ENCODE measurements at regions of chr2 and their contacts with region 1.

Region 1: GRCh38 chr2:121076885-121077549 is 208.0 kb downstream of the TFCP2L1 start:
- DNase-seq: peak; percentile 71 to 77 (median 75)
- ATAC-seq: peak; percentile 83 to 90 (median 88)
- H3K4me3 ChIP-seq: no peak overlapping the region
- H3K27ac ChIP-seq: no peak overlapping the region
- H3K4me1 ChIP-seq: no peaks in the 10 kb centered on the region
- H3K27me3 ChIP-seq: no peaks in the 10 kb centered on the region
- CTCF ChIP-seq: peak; percentile 61 to 97 (median 92)
- POLR2A ChIP-seq: no peak

Region 2: DNA sequence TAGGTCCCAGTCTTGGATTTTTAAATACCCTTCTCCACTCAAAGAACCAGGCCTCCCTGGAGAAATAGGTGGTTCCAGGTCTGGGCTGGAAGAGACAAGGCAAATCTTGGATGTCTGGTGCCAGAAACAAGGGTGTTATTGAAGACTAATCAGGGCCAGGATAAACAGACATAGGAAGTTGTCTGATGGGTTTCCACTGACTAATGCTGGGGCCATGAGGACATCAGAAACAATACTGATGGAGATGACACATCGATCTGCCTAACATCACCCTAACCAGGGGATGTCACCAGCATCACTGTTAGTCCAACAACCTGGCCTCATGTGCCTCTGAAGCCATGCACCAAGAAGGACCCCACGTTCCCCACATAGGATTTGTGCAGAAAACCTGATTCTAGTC is 383.9 kb before region 1 on chr2:
- intact Hi-C with region 1: loop called (anchors 5 kb)
- DNase-seq: no peak
- ATAC-seq: no peak
- H3K4me3 ChIP-seq: no peak overlapping the region
- H3K27ac ChIP-seq: no peak overlapping the region
- H3K4me1 ChIP-seq: no peaks in the 10 kb centered on the region
- H3K27me3 ChIP-seq: no peaks in the 10 kb centered on the region
- CTCF ChIP-seq: no peak
- POLR2A ChIP-seq: no peak

Region 3: DNA sequence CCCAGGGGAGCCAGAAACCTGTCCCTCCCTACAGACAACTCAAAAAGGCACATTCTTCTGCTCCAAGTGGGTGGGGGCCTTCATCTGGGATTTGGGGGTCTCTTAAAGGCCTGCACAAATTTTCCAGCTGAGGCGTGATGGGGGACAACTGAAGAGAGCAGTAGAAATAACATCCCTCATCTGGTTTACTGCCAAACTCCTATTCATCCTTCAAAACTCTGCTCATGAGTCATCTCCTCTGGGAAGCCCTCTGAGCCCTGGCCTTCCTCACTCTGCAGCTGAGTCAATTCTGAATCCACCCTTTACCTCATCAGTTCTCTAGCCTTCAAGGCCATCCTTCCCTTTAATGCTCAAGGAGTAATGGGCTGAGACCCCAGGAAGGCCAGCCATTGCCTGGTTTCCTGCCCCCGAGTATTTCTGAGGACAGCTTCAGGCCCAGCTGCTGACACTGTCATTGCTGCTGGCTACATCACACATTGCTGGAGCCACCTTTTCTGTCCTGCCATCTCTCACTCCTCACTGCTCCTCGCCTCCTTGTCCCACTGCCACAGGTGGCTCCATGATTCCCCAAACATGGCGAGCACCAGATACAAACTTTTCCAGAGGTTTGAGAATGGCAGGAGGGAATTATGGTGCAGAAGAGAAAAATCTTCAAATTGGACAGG is 373.6 kb before region 1 on chr2:
- intact Hi-C with region 1: loop called in 1 of 2 experiments (anchors 5 kb)
- DNase-seq: no peak
- ATAC-seq: no peak
- H3K4me3 ChIP-seq: no peak overlapping the region
- H3K27ac ChIP-seq: no peak overlapping the region
- H3K4me1 ChIP-seq: no peaks in the 10 kb centered on the region
- H3K27me3 ChIP-seq: no peaks in the 10 kb centered on the region
- CTCF ChIP-seq: no peak
- POLR2A ChIP-seq: no peak

Measured in right lobe of liver (tissue), 6 donors.